ENCODE measurements at regions of chr15 and their contacts with region 1.

Region 1: DNA sequence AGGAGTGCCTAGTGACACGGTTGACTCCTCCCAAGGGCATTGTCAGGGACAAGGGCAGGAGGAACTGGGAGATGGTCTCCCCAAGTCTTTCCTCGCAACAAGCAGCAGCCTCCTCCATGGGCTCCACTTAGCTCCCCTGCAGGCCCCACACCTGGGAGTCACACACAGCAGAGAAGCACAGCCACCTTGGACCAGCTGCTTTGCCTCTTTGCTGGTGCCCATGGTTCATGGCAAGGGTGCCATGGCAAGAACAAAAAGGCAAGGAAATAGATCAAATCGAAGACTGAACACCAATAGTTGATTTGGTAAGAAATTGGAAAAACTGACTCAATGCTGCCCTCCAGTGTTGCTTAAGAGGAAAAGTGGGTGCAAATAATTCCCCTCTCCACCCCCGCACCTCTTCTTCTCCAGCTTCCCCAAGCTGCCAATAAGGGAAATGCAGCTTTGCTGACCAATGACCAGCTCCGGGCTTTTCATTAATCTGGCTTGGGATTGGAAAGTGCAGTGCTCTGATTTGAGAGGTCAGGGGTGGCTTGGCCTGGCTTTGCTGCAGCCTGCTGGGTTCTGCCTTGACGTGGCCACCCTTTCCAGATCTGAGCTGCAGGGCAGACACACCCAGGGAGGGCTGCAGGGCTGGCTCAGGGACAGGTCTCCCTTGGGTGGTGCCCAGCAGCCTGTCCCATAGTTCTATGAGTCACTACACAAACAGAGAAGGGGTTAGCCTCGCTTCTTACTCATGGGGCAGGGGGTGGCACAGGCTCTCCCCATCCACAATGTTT is 162.0 kb downstream of the KLF13 start:
- DNase-seq: peak in 4 of 5 donors; percentile 43 to 62 (median 58)
- ATAC-seq: peak; percentile 52 to 81 (median 80)
- H3K4me3 ChIP-seq: no peak overlapping the region
- H3K27ac ChIP-seq: peak overlapping the region in 4 of 12 donors; percentile 33 to 51 (median 41)
- H3K4me1 ChIP-seq: peaks cover 0 to 26% (median 17%) of the 10 kb centered on the region in 12 donors
- H3K27me3 ChIP-seq: peaks cover 0 to 10% (median 0%) of the 10 kb centered on the region in 9 donors
- CTCF ChIP-seq: peak; percentile 70 to 99 (median 90)
- POLR2A ChIP-seq: no peak

Region 2: GRCh38 chr15:30670056-30670455 is 818.6 kb before region 1 on chr15:
- intact Hi-C with region 1: loop called in 2 of 10 experiments (anchors 10 kb)
- DNase-seq: no peak
- ATAC-seq: no peak
- H3K4me3 ChIP-seq: no peak overlapping the region
- H3K27ac ChIP-seq: no peak overlapping the region
- H3K4me1 ChIP-seq: peaks cover 0 to 5% (median 0%) of the 10 kb centered on the region in 12 donors
- H3K27me3 ChIP-seq: no peaks in the 10 kb centered on the region
- CTCF ChIP-seq: no peak
- POLR2A ChIP-seq: no peak

Region 3: DNA sequence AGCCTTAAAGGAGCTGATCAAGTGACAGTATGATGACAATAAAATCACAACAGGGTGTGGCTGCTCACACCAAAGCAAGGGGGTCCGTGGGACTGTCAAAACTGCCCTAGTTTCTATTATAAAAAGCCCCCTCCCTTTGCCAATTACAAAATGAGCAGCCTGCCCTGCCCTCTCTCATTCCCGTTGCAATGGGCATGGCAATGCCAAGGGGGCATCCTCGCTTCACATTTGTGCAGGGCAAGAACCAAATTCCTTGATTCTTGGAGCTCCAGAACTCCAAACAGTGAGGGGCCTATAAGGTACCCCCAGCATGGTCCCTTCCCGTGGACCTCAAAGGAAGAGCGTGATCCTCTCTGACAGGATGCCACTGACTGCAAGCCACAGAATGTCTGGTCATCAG is 282.2 kb before region 1 on chr15:
- intact Hi-C with region 1: loop called in 8 of 10 experiments (anchors 2 to 5 kb)
- DNase-seq: no peak
- ATAC-seq: no peak
- H3K4me3 ChIP-seq: no peak overlapping the region
- H3K27ac ChIP-seq: no peak overlapping the region
- H3K4me1 ChIP-seq: no peaks in the 10 kb centered on the region
- H3K27me3 ChIP-seq: no peaks in the 10 kb centered on the region
- CTCF ChIP-seq: peak in 5 of 12 donors; percentile 11 to 30 (median 21)
- POLR2A ChIP-seq: no peak

Region 4: GRCh38 chr15:31326156-31326732 is 162.4 kb before region 1 on chr15:
- intact Hi-C with region 1: loop called in 6 of 10 experiments (anchors 2 to 10 kb)
- DNase-seq: peak; percentile 95 to 100 (median 99)
- ATAC-seq: peak; percentile 89 to 93 (median 92)
- H3K4me3 ChIP-seq: peak overlapping the region; percentile 42 to 96 (median 84)
- H3K27ac ChIP-seq: peak overlapping the region; percentile 98 to 100 (median 100)
- H3K4me1 ChIP-seq: peaks cover 0 to 50% (median 38%) of the 10 kb centered on the region in 12 donors
- H3K27me3 ChIP-seq: no peaks in the 10 kb centered on the region
- CTCF ChIP-seq: peak in 1 of 12 donors; percentile 5
- POLR2A ChIP-seq: peak; percentile 68 to 95

Region 5: GRCh38 chr15:31402511-31403056 is 86.0 kb before region 1 on chr15:
- intact Hi-C with region 1: loop called in 3 of 10 experiments (anchors 5 to 10 kb)
- DNase-seq: peak; percentile 67 to 85 (median 72)
- ATAC-seq: peak; percentile 35 to 84 (median 80)
- H3K4me3 ChIP-seq: peak overlapping the region in 3 of 12 donors; percentile 1 to 10 (median 2)
- H3K27ac ChIP-seq: peak overlapping the region in 11 of 12 donors; percentile 37 to 78 (median 55)
- H3K4me1 ChIP-seq: peaks cover 0 to 32% (median 18%) of the 10 kb centered on the region in 12 donors
- H3K27me3 ChIP-seq: no peaks in the 10 kb centered on the region
- CTCF ChIP-seq: no peak
- POLR2A ChIP-seq: peak in 1 of 2 donors; percentile 37

Region 6: GRCh38 chr15:31427411-31427810 is 61.2 kb before region 1 on chr15:
- intact Hi-C with region 1: no loop called
- DNase-seq: no peak
- ATAC-seq: no peak
- H3K4me3 ChIP-seq: no peak overlapping the region
- H3K27ac ChIP-seq: no peak overlapping the region
- H3K4me1 ChIP-seq: no peaks in the 10 kb centered on the region
- H3K27me3 ChIP-seq: no peaks in the 10 kb centered on the region
- CTCF ChIP-seq: no peak
- POLR2A ChIP-seq: no peak

Region 7: DNA sequence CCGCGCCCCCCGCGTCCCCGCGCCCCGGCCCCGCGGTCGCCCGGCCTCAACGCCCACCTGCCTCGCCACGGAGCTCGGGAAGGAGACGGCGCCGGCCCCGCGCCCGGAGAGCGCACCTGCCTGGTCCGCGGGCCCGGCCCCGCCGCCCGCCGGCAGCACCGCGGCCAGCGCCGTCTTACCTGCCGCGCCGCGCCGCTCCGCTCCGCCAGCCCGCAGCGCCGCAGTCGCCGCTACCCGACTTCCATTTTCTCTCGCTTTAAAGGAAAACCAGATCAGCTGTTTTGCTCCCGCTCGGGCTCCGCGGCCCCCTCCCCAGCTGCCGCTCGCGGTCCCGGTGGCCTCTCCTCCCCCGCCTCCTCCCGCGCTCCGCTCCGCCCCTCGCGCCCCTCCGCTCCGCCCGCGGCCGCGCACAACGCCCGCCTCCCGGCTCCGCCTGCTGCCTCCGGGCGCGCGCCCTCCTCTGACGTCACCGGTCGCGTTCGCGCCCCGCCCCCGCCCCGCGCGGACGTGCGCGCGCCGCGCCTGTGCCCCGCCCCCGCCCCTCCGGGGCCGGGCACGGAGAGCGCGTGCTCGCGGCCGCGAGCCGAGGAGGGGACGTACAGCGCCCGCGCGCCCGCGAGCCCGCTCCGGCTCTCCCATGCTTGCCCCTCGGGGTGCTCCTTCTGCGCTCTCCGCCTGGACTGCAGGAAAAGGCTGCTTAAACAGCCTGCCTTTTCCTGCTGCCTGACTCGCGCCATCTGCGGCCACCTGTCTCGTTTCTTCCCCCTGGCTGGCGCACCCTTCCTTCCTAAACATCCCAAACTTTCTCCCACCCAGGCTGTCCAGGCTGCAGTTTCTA is 381.9 kb after region 1 on chr15:
- intact Hi-C with region 1: loop called in 2 of 10 experiments (anchors 5 to 10 kb)
- DNase-seq: peak; percentile 62 to 94 (median 90)
- ATAC-seq: peak; percentile 91 to 98 (median 98)
- H3K4me3 ChIP-seq: peak within 1 kb of the TSS; percentile 37 to 93 (median 71)
- H3K27ac ChIP-seq: peak within 1 kb of the TSS in 11 of 12 donors; percentile 61 to 88 (median 73)
- H3K4me1 ChIP-seq: peaks cover 0 to 17% (median 8%) of the 10 kb centered on the region in 12 donors
- H3K27me3 ChIP-seq: peaks cover 0 to 5% (median 0%) of the 10 kb centered on the region in 9 donors
- CTCF ChIP-seq: peak in 2 of 12 donors; percentile 9 to 17
- POLR2A ChIP-seq: no peak